Activated CD8-positive, alpha-beta T cell treated with anti-CD3 and anti-CD28 coated beads for 36 hours (primary cell): ENCODE measurements at regions of chr7 and their contacts with region 1.

Region 1: GRCh38 chr7:158829342-158830210 is at the start of gene ESYT2:
- DNase-seq: peak; percentile 98
- ATAC-seq: peak; percentile 81
- H3K4me3 Mint-ChIP-seq: peak within 1 kb of the TSS; percentile 89
- H3K27ac Mint-ChIP-seq: peak within 1 kb of the TSS; percentile 95
- H3K4me1 Mint-ChIP-seq: peaks cover 26% of the 10 kb centered on the region
- H3K27me3 Mint-ChIP-seq: no peaks in the 10 kb centered on the region
- CTCF ChIP-seq: no peak
- total RNA-seq, gene ESYT2: 55.5 to 56.6 TPM

Region 2: GRCh38 chr7:158525648-158526484 is 303.7 kb before region 1 on chr7:
- CTCF ChIA-PET with region 1: no interaction called
- POLR2A ChIA-PET with region 1: no interaction called
- intact Hi-C with region 1: no loop called
- DNase-seq: no peak
- ATAC-seq: no peak
- H3K4me3 Mint-ChIP-seq: no peak overlapping the region
- H3K27ac Mint-ChIP-seq: no peak overlapping the region
- H3K4me1 Mint-ChIP-seq: no peaks in the 10 kb centered on the region
- H3K27me3 Mint-ChIP-seq: peaks cover 2% of the 10 kb centered on the region
- CTCF ChIP-seq: no peak

Region 3: GRCh38 chr7:158809596-158809995 is 20.0 kb before region 1 on chr7:
- CTCF ChIA-PET with region 1: interaction called, 11 read pairs
- POLR2A ChIA-PET with region 1: interaction called, 11 read pairs
- intact Hi-C with region 1: no loop called
- DNase-seq: peak; percentile 45
- ATAC-seq: peak; percentile 35
- H3K4me3 Mint-ChIP-seq: no peak overlapping the region
- H3K27ac Mint-ChIP-seq: peak overlapping the region; percentile 97
- H3K4me1 Mint-ChIP-seq: peaks cover 74% of the 10 kb centered on the region
- H3K27me3 Mint-ChIP-seq: no peaks in the 10 kb centered on the region
- CTCF ChIP-seq: no peak

Region 4: DNA sequence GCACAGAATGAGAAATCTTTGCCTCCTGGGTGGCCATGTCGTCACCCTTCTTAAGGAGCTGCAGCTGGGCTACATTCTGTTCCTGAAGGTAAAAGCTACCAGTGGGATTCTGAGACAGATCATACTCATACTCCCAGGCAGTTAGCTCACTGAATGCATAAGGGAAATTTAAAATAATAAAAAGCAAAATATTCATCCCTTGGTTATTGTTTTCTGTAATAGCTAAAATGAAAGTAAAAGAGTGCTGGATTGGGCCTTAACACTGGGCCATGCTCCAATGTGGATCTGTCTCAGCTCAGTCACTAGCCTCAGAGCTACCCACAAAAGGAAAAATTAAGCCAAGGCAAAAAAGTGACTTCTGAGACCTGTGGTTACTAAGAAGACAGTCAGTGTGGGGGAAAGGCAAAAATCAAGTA is 17.9 kb after region 1 on chr7:
- CTCF ChIA-PET with region 1: interaction called, 5 read pairs
- POLR2A ChIA-PET with region 1: interaction called, 8 read pairs
- intact Hi-C with region 1: loop called (anchors 2 kb)
- DNase-seq: peak; percentile 33
- ATAC-seq: peak; percentile 86
- H3K4me3 Mint-ChIP-seq: peak overlapping the region; percentile 50
- H3K27ac Mint-ChIP-seq: peak overlapping the region; percentile 95
- H3K4me1 Mint-ChIP-seq: peaks cover 32% of the 10 kb centered on the region
- H3K27me3 Mint-ChIP-seq: no peaks in the 10 kb centered on the region
- CTCF ChIP-seq: no peak